ENCODE measurements at regions of chr10 and their contacts with region 1.

Region 1: GRCh38 chr10:100872034-100872791 is 40.5 kb upstream of the SLF2 start:
- DNase-seq: peak; percentile 27 to 92
- H3K4me3 ChIP-seq: no peak overlapping the region
- H3K27ac ChIP-seq: no peak overlapping the region
- H3K4me1 ChIP-seq: peaks cover 0 to 12% (median 7%) of the 10 kb centered on the region in 4 experiments; a peak in 5 of 7 replicates
- H3K27me3 ChIP-seq: peaks cover 0 to 29% (median 17%) of the 10 kb centered on the region in 4 experiments; a peak in 6 of 7 replicates
- CTCF ChIP-seq: peak; percentile 69 to 86 (median 84)
- EP300 ChIP-seq: no peak
- POLR2A ChIP-seq: no peak
- RAD21 ChIP-seq: peak; percentile 84 to 85

Region 2: DNA sequence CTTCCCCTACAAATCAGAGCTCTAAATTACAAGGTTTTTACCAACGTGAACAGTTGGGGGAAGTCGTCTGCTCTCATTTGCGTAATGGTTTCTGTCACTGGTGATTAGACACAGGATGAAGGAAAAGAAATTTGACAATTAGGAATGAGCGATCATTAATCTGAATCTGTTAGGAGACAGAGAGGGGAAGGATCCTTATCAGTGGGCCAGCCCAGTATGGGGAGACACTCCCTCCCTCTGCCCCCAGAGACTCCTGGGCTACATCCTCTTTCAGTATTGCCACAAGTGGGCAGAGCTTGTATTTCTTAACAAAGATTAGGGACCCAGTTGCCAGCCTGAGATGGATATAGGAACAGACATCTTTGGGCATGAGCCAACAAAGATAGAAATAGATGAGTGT is 321.0 kb before region 1 on chr10:
- CTCF ChIA-PET with region 1: interaction called, 10 read pairs
- POLR2A ChIA-PET with region 1: interaction called, 3 read pairs
- DNase-seq: no peak
- H3K4me3 ChIP-seq: no peak overlapping the region
- H3K27ac ChIP-seq: no peak overlapping the region
- H3K4me1 ChIP-seq: no peaks in the 10 kb centered on the region
- H3K27me3 ChIP-seq: no peaks in the 10 kb centered on the region
- CTCF ChIP-seq: no peak
- EP300 ChIP-seq: no peak
- POLR2A ChIP-seq: no peak
- RAD21 ChIP-seq: no peak

Region 3: DNA sequence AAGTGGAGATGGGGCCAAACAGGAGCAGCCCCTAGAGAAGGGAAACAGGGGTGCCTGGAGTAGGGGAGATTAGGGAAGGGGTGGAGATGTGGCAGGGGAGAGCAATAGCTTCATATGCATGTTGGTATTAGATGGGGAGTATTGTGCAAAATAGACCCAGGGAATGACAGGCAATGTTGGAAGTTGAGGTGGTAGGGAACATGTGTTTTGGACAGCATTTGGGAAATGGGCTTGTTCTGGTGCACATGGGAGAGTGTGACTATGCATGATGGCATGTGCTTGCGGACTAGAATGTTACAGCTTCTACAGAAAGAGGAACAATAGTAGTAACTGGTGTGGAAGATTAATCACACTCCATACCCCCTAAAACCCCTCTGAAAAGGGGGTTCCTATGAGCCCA is 116.4 kb before region 1 on chr10:
- CTCF ChIA-PET with region 1: interaction called, 17 read pairs
- POLR2A ChIA-PET with region 1: interaction called, 4 read pairs
- DNase-seq: no peak
- H3K4me3 ChIP-seq: no peak overlapping the region
- H3K27ac ChIP-seq: no peak overlapping the region
- H3K4me1 ChIP-seq: peaks cover 0 to 2% (median 0%) of the 10 kb centered on the region in 4 experiments; a peak in 1 of 7 replicates
- H3K27me3 ChIP-seq: peaks cover 35 to 73% (median 61%) of the 10 kb centered on the region in 4 experiments
- CTCF ChIP-seq: no peak
- EP300 ChIP-seq: no peak
- POLR2A ChIP-seq: no peak
- RAD21 ChIP-seq: no peak

Region 4: DNA sequence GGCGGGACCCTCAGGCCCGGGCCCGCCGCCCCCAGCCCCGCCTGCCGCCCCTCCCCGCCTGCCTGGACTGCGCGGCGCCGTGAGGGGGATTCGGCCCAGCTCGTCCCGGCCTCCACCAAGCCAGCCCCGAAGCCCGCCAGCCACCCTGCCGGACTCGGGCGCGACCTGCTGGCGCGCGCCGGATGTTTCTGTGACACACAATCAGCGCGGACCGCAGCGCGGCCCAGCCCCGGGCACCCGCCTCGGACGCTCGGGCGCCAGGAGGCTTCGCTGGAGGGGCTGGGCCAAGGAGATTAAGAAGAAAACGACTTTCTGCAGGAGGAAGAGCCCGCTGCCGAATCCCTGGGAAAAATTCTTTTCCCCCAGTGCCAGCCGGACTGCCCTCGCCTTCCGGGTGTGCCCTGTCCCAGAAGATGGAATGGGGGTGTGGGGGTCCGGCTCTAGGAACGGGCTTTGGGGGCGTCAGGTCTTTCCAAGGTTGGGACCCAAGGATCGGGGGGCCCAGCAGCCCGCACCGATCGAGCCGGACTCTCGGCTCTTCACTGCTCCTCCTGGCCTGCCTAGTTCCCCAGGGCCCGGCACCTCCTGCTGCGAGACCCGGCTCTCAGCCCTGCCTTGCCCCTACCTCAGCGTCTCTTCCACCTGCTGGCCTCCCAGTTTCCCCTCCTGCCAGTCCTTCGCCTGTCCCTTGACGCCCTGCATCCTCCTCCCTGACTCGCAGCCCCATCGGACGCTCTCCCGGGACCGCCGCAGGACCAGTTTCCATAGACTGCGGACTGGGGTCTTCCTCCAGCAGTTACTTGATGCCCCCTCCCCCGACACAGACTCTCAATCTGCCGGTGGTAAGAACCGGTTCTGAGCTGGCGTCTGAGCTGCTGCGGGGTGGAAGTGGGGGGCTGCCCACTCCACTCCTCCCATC is 44.1 kb before region 1 on chr10:
- CTCF ChIA-PET with region 1: interaction called, 74 read pairs
- POLR2A ChIA-PET with region 1: no interaction called
- DNase-seq: peak in 1 of 2 experiments; percentile 74
- H3K4me3 ChIP-seq: peak overlapping the region in 3 of 4 experiments; percentile 26 to 53 (median 28); a peak in 5 of 8 replicates
- H3K27ac ChIP-seq: no peak overlapping the region
- H3K4me1 ChIP-seq: peaks cover 4 to 26% (median 20%) of the 10 kb centered on the region in 4 experiments
- H3K27me3 ChIP-seq: peaks cover 96 to 100% (median 100%) of the 10 kb centered on the region in 4 experiments
- CTCF ChIP-seq: peak in 1 of 3 experiments; percentile 42; a peak in 2 of 4 replicates
- EP300 ChIP-seq: no peak
- POLR2A ChIP-seq: no peak
- RAD21 ChIP-seq: peak; percentile 12 to 52; a peak in 3 of 4 replicates

Region 5: GRCh38 chr10:100847440-100847839 is 24.8 kb before region 1 on chr10:
- CTCF ChIA-PET with region 1: interaction called, 35 read pairs
- POLR2A ChIA-PET with region 1: no interaction called
- DNase-seq: no peak
- H3K4me3 ChIP-seq: no peak overlapping the region
- H3K27ac ChIP-seq: no peak overlapping the region
- H3K4me1 ChIP-seq: no peaks in the 10 kb centered on the region
- H3K27me3 ChIP-seq: peaks cover 0 to 2% (median 0%) of the 10 kb centered on the region in 4 experiments; a peak in 4 of 7 replicates
- CTCF ChIP-seq: no peak
- EP300 ChIP-seq: no peak
- POLR2A ChIP-seq: no peak
- RAD21 ChIP-seq: no peak

Region 6: DNA sequence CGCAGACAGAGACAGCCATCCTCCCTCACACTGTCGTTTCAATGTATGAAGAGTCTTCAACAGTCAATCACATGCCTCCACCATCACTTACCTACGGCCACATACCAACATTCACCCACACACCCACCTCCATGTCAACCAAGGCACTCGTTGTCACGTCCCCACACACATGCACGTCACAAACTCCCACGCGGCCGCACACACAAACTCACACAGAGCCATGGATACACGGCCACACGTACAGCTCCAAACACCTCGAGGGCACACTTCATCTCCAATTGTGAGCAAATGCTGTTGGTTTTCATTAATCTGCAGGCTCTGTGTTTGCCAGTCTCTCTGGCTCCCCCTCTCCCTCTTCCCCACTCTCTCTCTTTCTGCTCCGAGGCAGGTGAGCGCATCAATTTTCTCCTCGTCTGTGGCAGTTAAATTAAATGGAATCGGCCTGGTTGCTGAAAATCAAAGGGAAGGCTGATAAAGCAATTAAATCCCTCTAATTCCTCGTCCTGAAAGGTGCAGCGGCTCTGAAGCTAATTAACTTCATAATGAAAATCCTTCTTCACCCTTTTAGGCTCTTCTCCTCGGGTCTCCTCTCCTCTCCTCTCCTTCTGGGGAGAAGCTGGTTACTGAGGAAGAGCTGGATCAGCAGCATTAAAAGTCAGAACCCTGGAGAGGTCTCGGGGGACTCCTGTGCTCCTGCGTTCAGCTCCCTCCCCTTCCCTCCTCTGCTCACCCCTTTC is 13.3 kb before region 1 on chr10:
- CTCF ChIA-PET with region 1: interaction called, 52 read pairs
- POLR2A ChIA-PET with region 1: no interaction called
- DNase-seq: no peak
- H3K4me3 ChIP-seq: no peak overlapping the region
- H3K27ac ChIP-seq: no peak overlapping the region
- H3K4me1 ChIP-seq: no peaks in the 10 kb centered on the region; a peak in 1 of 7 replicates
- H3K27me3 ChIP-seq: peaks cover 0 to 8% (median 5%) of the 10 kb centered on the region in 4 experiments; a peak in 4 of 7 replicates
- CTCF ChIP-seq: no peak
- EP300 ChIP-seq: no peak
- POLR2A ChIP-seq: no peak
- RAD21 ChIP-seq: no peak

Region 7: DNA sequence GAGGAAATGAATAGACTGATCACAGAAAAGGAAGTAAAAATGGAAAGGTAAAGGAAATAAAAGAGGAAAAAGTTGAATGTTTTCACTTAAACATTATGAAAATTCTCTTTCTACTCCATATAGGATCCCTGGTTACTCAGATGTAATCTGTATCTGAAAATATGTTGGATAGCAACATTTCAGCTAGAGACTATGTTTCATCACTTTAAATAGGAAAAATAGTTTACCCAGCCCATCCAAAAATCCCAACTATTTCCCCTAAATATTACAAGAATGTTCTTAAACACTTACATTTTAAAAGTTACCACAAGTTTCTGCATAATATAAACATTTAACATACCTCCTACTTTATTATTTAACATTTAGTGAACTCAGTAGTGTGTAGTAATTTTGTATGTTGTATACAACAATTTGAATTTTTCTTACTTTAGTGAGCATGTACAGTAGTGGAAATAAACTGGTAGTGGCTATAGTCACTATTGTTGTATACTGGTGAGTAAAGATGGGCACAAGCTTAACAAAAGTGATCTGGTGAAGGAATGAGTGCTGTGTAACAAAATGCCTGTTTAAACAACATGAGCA is 67.6 kb after region 1 on chr10:
- CTCF ChIA-PET with region 1: no interaction called
- POLR2A ChIA-PET with region 1: no interaction called
- DNase-seq: no peak
- H3K4me3 ChIP-seq: no peak overlapping the region
- H3K27ac ChIP-seq: no peak overlapping the region
- H3K4me1 ChIP-seq: no peaks in the 10 kb centered on the region
- H3K27me3 ChIP-seq: no peaks in the 10 kb centered on the region
- CTCF ChIP-seq: no peak
- EP300 ChIP-seq: no peak
- POLR2A ChIP-seq: no peak
- RAD21 ChIP-seq: no peak